Mammary epithelial cell (primary cell): ENCODE measurements at regions of chr20 and their contacts with region 1.

Region 1: DNA sequence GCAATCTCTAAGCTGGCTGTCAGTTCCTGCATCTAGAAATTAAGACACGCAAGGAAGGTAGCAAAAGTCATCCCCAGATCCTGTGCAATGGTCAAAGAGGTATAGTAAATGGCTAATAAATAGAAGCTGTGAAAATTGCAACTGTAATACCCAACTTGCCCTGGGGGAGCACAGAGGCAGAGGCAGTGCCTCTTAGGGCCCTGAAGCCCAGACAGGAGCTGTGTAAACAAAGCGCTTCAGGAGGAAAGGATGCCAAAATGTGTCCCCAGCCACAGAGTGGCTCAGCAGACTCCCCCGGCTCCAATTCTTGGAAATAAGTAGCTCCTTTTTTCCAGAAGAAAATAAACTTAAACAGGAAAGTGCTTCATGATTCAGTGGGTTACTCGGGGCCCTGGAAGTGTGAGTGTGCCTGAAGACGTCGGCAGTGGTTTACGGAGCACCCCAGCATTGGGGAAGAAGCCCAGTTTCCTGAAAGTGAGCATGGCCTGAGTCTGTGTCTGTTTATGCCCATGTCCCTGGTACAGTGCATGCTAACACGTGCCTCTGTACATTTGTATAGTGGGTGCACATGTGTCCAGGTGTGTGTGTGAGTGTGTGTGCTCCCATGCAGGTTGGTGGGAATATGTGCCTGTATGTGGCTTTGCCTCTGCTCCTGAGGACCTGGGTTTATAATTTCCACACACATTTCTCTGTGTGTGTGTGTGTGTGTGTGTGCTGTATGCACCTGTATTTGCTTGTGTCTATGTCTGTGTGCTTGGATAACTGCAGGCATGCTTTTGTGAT is 246.7 kb downstream of the MAFB start:
- DNase-seq: no peak
- H3K4me3 ChIP-seq: no peak overlapping the region
- H3K27ac ChIP-seq: no peak overlapping the region
- H3K4me1 ChIP-seq: no peaks in the 10 kb centered on the region
- H3K27me3 ChIP-seq: no peaks in the 10 kb centered on the region
- CTCF ChIP-seq: peak; percentile 19 to 20

Region 2: GRCh38 chr20:40489866-40490265 is 47.5 kb after region 1 on chr20:
- CTCF ChIA-PET with region 1: no interaction called
- dilution Hi-C with region 1: no loop called
- in situ Hi-C with region 1: no loop called
- intact Hi-C with region 1: loop called (anchors 5 kb)
- DNase-seq: peak; percentile 89
- H3K4me3 ChIP-seq: no peak overlapping the region
- H3K27ac ChIP-seq: peak overlapping the region; percentile 9
- H3K4me1 ChIP-seq: peaks cover 51% of the 10 kb centered on the region
- H3K27me3 ChIP-seq: no peaks in the 10 kb centered on the region
- CTCF ChIP-seq: no peak